ENCODE measurements at regions of chr3 and their contacts with region 1.

Region 1: DNA sequence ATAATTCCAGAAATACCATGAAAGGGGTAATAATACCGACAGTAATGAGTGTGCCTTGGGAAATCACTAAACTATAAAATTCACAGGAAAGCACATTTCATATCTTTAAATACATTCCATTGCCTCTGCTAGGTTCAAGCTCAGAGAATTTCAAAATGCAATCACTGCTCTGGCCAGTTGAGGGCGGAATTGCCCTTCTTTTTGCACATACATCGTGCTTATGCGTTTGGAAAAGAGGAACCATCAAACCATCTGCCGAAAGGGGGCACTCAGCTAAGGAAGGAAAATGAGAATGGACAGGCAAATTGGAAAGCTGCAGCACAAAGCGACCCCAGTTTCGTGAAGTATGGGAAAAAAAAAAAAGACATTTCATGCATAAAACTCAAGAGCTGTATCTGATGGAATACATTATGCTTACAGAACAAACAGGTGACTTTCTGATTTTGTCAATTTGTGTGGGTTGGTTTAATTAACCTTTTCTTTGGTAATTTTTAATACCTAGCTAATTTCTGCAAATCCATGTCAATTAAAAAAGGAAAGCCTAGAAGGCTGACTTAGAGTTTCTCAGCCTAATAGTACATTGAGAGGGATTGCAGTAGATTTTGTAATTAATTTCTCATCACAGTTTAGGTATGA is 61.4 kb downstream of the TUSC7 start:
- DNase-seq: peak; percentile 38 to 65
- ATAC-seq: peak; percentile 80

Region 2: GRCh38 chr3:116059421-116060096 is 711.4 kb before region 1 on chr3:
- intact Hi-C with region 1: no loop called
- DNase-seq: no peak
- ATAC-seq: no peak

Region 3: DNA sequence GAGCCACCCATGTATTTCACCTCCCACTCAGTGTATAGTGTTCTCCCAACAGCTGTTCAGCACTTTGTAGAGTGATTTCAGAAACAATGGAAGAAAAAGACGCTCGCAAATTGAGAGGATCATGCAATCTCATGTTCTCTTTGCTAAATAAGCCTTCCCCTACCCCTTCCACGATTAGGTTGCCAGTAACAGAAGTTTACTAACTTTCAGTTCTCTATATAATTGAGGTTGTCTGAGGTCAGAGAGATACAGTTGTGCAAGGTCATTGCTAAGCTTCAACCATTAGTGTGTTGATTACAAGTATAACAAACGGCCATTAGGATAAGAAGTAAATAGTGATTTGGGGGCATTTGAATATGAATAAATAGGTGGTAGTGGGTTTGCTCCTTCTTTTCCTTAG is 38.3 kb after region 1 on chr3:
- intact Hi-C with region 1: no loop called
- DNase-seq: no peak
- ATAC-seq: no peak

Region 4: GRCh38 chr3:117526470-117527079 is 755.6 kb after region 1 on chr3:
- intact Hi-C with region 1: loop called in 1 of 2 experiments (anchors 10 kb)
- DNase-seq: peak in 1 of 2 donors; percentile 36
- ATAC-seq: peak; percentile 38